ENCODE measurements at regions of chr4 and their contacts with region 1.

Region 1: DNA sequence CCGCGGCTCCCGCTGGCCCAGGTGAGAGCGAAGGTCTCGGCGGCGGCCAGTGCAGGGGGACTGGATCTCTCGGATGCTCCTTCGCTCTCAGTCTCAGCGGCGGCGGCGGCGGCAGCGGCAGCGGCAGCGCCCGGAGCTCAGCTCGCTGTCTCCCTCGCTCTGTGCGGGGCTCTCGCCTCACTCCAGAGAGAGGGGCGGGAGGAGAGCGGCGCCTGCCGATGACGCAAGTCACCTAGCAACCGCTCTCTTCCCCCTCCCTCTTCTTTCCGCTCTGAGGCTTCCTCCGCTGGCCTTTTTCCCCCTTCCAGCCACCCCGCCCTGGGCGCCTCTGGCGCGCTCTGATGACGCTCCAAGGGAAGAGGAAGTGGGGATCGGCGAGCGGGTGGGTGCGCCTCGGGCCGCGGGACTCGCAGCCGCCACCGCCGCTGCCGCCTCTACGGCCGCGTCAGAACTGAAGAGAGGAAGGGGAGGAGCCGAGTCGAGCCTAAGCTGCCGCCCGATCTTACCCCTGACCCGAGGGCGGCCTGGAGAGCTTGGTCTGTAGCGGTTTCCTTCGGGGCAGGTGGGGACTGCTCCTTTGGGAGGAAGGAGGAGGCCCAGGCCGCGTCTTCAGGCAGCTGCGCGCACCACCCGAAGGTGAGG is at the start of gene FBXW7:
- DNase-seq: peak; percentile 98 to 100 (median 100)
- ATAC-seq: peak; percentile 91
- H3K4me3 ChIP-seq: peak within 1 kb of the TSS; percentile 87
- H3K4me3 Mint-ChIP-seq: peak within 1 kb of the TSS; percentile 90 to 99 (median 97)
- H3K27ac ChIP-seq: peak within 1 kb of the TSS; percentile 90
- H3K27ac Mint-ChIP-seq: peak within 1 kb of the TSS; percentile 93 to 99 (median 97)
- H3K4me1 ChIP-seq: peaks cover 29 to 53% of the 10 kb centered on the region in 2 donors
- H3K4me1 Mint-ChIP-seq: peaks cover 43 to 80% (median 65%) of the 10 kb centered on the region in 7 donors
- H3K27me3 ChIP-seq: no peaks in the 10 kb centered on the region
- H3K27me3 Mint-ChIP-seq: no peaks in the 10 kb centered on the region
- total RNA-seq, gene FBXW7: 57.5 to 139 (median 116) TPM

Region 2: GRCh38 chr4:151760712-151761527 is 775.1 kb before region 1 on chr4 and contains the start of gene GATB:
- CTCF ChIA-PET with region 1: interaction called, 3 read pairs
- POLR2A ChIA-PET with region 1: no interaction called
- intact Hi-C with region 1: loop called (anchors 1 kb)
- DNase-seq: peak; percentile 67 to 97 (median 93)
- ATAC-seq: peak; percentile 99
- H3K4me3 ChIP-seq: peak within 1 kb of the TSS; percentile 87
- H3K4me3 Mint-ChIP-seq: peak within 1 kb of the TSS; percentile 88 to 99 (median 98)
- H3K27ac ChIP-seq: peak within 1 kb of the TSS; percentile 69
- H3K27ac Mint-ChIP-seq: peak within 1 kb of the TSS; percentile 94 to 99 (median 98)
- H3K4me1 ChIP-seq: peaks cover 9 to 13% of the 10 kb centered on the region in 2 donors
- H3K4me1 Mint-ChIP-seq: peaks cover 7 to 24% (median 18%) of the 10 kb centered on the region in 7 donors
- H3K27me3 ChIP-seq: no peaks in the 10 kb centered on the region
- H3K27me3 Mint-ChIP-seq: peaks cover 0 to 8% (median 4%) of the 10 kb centered on the region in 5 donors
- total RNA-seq, gene GATB: 10.5 to 17.3 (median 14.2) TPM

Region 3: DNA sequence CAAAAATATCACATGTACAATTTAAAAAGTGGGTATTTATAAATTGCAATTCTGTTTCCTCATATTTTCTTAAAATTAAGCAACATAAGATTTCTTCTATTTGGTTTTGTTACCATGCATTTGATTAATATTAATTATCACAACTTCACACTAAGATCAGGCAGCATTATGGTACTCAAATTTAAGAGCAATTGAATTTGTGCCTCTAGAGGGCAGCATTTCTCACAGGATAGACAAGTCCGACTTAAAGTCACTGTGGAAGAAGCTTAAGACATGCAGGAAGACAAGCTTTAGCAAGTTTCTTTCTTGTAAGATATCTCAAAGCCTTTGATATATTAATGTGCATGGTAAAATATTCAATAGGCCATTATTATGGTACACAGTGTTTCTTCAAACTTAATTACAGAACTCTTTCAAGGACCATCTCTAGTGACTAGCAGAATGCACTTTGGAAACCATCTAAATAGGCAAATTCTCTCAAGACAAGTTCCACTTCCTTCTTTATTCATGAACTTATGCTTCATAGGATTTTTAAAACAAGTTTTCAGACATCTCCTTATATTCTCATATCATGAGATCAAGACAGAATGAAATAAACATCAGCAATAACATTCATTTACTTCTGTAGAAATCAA is 35.1 kb before region 1 on chr4:
- CTCF ChIA-PET with region 1: interaction called, 20 read pairs
- POLR2A ChIA-PET with region 1: interaction called, 41 read pairs
- intact Hi-C with region 1: loop called (anchors 1 to 2 kb)
- DNase-seq: peak in 7 of 9 donors; percentile 70 to 85 (median 79)
- ATAC-seq: peak; percentile 90
- H3K4me3 ChIP-seq: no peak overlapping the region
- H3K4me3 Mint-ChIP-seq: no peak overlapping the region
- H3K27ac ChIP-seq: no peak overlapping the region
- H3K27ac Mint-ChIP-seq: peak overlapping the region in 4 of 9 donors; percentile 56 to 87 (median 68)
- H3K4me1 ChIP-seq: no peaks in the 10 kb centered on the region
- H3K4me1 Mint-ChIP-seq: peaks cover 20 to 53% (median 41%) of the 10 kb centered on the region in 7 donors
- H3K27me3 ChIP-seq: no peaks in the 10 kb centered on the region
- H3K27me3 Mint-ChIP-seq: no peaks in the 10 kb centered on the region

Region 4: DNA sequence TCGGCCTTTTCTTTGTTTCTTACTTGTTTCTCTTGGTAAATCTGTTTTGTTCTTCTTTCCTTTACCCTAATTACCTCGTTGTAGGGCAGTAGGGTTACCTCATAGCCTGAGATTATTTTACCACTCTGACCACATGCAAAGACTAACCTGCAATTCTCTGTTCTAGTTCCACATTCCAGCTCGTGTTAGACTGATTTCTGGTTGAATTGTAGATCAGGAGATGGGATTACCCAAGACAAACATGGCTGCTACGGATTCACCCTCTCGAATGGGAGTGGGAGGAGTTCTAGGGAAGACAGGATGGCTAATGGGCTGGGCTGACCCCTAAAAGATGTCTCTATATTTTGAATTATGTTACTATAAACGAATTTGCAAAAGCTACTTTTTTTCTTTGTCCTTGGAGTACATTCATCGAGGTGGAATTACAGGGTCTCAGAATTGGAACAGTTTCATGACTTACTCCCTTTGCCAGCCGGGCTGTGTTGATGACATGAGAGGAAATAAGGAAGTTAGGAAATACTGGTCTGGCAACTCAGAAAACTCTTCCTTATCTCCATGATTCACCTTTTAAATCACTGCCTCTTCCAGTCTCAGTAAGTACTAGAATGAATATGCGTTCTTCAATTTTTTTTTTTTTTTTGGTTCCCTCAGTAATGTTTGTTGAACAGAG is 36.5 kb after region 1 on chr4:
- CTCF ChIA-PET with region 1: interaction called, 3 read pairs
- POLR2A ChIA-PET with region 1: interaction called, 3 read pairs
- intact Hi-C with region 1: loop called in 1 of 2 experiments (anchors 5 kb)
- DNase-seq: no peak
- ATAC-seq: no peak
- H3K4me3 ChIP-seq: no peak overlapping the region
- H3K4me3 Mint-ChIP-seq: no peak overlapping the region
- H3K27ac ChIP-seq: no peak overlapping the region
- H3K27ac Mint-ChIP-seq: no peak overlapping the region
- H3K4me1 ChIP-seq: no peaks in the 10 kb centered on the region
- H3K4me1 Mint-ChIP-seq: peaks cover 0 to 4% (median 0%) of the 10 kb centered on the region in 7 donors
- H3K27me3 ChIP-seq: no peaks in the 10 kb centered on the region
- H3K27me3 Mint-ChIP-seq: peaks cover 0 to 33% (median 0%) of the 10 kb centered on the region in 5 donors

Region 5: DNA sequence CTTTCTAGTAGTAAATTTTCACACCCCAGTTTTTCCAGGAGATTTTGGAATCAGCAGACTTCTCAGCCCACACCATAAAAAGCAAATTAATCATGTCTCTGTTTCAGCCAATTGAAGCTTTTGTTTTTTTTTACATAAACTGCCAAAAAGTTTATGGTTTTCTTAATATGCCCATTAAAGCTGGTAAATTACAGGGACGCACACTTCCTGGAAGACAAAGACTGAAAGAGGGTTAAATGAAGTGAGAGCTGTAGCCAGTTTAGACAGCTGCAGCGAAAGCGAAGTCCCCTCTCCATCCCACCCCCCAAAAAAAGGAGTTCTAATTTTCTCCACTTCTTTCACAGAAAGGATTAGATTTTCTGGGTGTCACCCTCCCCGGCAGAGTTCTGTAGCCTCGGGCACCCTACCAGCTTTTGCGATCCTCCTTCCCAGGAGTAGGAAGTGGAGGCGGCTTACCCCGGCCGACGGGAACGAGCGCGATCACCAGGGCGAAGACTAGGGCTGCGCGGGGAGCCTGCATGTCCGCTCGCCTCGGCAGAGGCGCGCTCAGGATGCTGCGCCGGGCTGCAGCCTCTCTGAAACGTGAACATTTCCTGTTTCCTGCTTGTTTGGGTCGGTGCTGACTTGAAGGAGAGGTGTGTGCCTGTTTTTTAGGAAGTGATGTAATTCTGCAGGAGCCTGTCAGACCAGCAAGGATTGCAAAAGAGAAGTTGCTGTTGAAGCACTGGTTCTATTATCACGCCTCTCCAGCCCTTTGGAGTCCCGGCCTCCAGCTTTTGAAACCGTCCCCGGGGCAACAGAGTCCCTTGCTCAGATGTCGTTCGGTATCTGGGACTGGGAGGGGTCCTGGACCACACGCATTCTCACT is 143.6 kb after region 1 on chr4 and contains the start of gene TMEM154:
- CTCF ChIA-PET with region 1: no interaction called
- POLR2A ChIA-PET with region 1: interaction called, 22 read pairs
- intact Hi-C with region 1: loop called (anchors 1 kb)
- DNase-seq: peak; percentile 57 to 85 (median 77)
- ATAC-seq: peak; percentile 95
- H3K4me3 ChIP-seq: peak within 1 kb of the TSS; percentile 81
- H3K4me3 Mint-ChIP-seq: peak within 1 kb of the TSS; percentile 78 to 97 (median 95)
- H3K27ac ChIP-seq: peak within 1 kb of the TSS; percentile 77
- H3K27ac Mint-ChIP-seq: peak within 1 kb of the TSS; percentile 92 to 98 (median 96)
- H3K4me1 ChIP-seq: peaks cover 22% of the 10 kb centered on the region in 2 donors
- H3K4me1 Mint-ChIP-seq: peaks cover 39 to 71% (median 49%) of the 10 kb centered on the region in 7 donors
- H3K27me3 ChIP-seq: no peaks in the 10 kb centered on the region
- H3K27me3 Mint-ChIP-seq: no peaks in the 10 kb centered on the region
- total RNA-seq, gene TMEM154: 21.3 to 46.8 (median 36.9) TPM

Region 6: DNA sequence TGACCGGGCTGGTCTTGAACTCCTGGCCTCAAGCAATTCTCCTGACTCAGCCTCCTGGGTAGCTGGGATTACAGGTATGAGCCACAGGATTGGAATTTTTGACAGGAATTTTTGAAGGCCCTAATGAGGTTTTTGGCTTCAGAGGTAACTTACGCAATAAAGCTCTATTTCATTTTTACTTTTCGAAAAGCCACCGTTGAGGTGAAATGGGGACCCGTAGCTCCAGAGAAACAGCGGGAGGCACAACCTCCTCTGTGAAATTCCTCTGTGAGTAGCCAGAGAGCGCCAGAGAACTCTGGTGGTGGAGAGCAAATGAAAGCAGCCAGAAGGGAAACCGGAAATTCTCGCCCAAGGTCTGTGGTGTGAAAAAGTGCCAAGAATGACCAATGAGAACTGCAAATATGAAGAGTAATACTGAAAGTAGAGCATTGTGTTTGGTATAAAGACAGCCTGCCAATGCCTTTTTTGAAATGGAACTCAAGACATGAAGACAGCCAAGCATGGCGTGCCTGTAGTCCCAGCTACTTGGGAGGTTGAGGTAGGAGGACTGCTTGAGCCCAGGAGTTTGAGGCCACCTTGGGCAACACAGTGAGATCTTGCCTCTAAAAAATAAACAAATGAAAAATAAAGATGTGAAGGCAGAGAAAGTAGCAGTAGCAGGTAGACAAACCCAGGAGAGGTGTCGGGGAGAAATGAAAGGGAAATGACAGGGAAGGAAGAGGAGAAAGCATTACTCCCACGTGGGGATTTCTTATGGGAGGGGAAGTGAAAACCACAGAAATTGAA is 897.1 kb after region 1 on chr4:
- CTCF ChIA-PET with region 1: no interaction called
- POLR2A ChIA-PET with region 1: no interaction called
- intact Hi-C with region 1: loop called in 1 of 2 experiments (anchors 5 kb)
- DNase-seq: peak; percentile 22 to 72 (median 59)
- ATAC-seq: peak; percentile 90
- H3K4me3 ChIP-seq: peak overlapping the region; percentile 65
- H3K4me3 Mint-ChIP-seq: peak overlapping the region; percentile 78 to 98 (median 87)
- H3K27ac ChIP-seq: peak overlapping the region; percentile 66
- H3K27ac Mint-ChIP-seq: peak overlapping the region; percentile 88 to 98 (median 96)
- H3K4me1 ChIP-seq: peaks cover 13 to 54% of the 10 kb centered on the region in 2 donors
- H3K4me1 Mint-ChIP-seq: peaks cover 31 to 83% (median 72%) of the 10 kb centered on the region in 7 donors
- H3K27me3 ChIP-seq: no peaks in the 10 kb centered on the region
- H3K27me3 Mint-ChIP-seq: no peaks in the 10 kb centered on the region

Measured in naive thymus-derived CD4-positive, alpha-beta T cell (primary cell).